ENCODE measurements at regions of chr14 and their contacts with region 1.

Region 1: GRCh38 chr14:103169954-103170353 is 46.7 kb downstream of the TNFAIP2 start:
- DNase-seq: peak in 1 of 5 donors; percentile 7
- H3K4me3 ChIP-seq: peak overlapping the region in 2 of 3 donors; percentile 12 to 27
- H3K27ac ChIP-seq: peak overlapping the region; percentile 60 to 75
- H3K4me1 ChIP-seq: peaks cover 0 to 9% (median 5%) of the 10 kb centered on the region in 3 donors
- H3K27me3 ChIP-seq: no peaks in the 10 kb centered on the region
- CTCF ChIP-seq: no peak

Region 2: GRCh38 chr14:103057365-103058096 is 112.4 kb before region 1 on chr14 and contains the start of gene CDC42BPB:
- intact Hi-C with region 1: no loop called
- DNase-seq: peak; percentile 94 to 98 (median 96)
- H3K4me3 ChIP-seq: peak within 1 kb of the TSS; percentile 71 to 84 (median 82)
- H3K27ac ChIP-seq: peak within 1 kb of the TSS; percentile 86 to 89
- H3K4me1 ChIP-seq: peaks cover 0 to 23% (median 0%) of the 10 kb centered on the region in 3 donors
- H3K27me3 ChIP-seq: no peaks in the 10 kb centered on the region
- CTCF ChIP-seq: no peak
- total RNA-seq, gene CDC42BPB: 127 TPM

Region 3: GRCh38 chr14:103104654-103105452 is 65.1 kb before region 1 on chr14:
- intact Hi-C with region 1: loop called (anchors 10 kb)
- DNase-seq: peak; percentile 78 to 89 (median 80)
- H3K4me3 ChIP-seq: peak overlapping the region in 1 of 3 donors; percentile 4
- H3K27ac ChIP-seq: no peak overlapping the region
- H3K4me1 ChIP-seq: peaks cover 0 to 14% (median 0%) of the 10 kb centered on the region in 3 donors
- H3K27me3 ChIP-seq: peaks cover 11% of the 10 kb centered on the region
- CTCF ChIP-seq: peak; percentile 98

Measured in kidney (tissue), 22 donors.